ENCODE measurements at regions of chr2 and their contacts with region 1.

Region 1: DNA sequence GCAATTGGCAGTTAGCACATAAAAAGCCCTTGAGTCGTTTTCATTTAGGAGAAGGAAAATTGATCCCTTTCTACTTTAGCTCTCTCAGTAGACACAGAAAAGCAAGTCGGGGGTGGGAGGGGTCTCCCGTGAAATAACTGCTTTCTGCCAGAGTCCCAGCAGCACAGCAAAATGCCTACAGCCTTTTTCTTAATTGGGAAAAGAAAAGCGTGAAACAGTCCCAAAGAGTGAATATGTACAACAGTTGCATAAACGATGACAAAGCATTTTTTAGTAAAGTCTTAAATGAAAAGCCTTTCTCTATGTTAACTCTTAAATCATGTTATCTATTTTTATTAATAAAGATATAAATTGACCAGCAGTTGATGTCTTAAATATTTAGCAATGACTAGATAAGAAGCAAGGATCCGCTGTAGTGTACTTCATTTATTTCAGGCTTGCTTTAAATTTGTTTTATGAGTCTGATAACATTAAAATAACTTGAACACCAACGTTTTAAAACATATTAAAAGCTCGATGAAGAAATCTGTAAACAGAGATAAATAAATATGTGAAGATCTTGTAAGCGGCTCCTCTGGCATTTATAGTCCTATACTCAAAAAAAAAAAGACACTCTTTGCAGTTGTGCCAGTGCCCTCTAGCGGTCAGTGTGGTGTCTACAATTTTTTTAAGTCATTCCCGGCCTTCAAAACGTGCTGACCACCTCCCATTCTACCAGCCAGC is 42.3 kb upstream of the ATIC start:
- DNase-seq: peak; percentile 87
- H3K4me3 Mint-ChIP-seq: no peak overlapping the region
- H3K27ac Mint-ChIP-seq: peak overlapping the region; percentile 49
- H3K4me1 Mint-ChIP-seq: no peaks in the 10 kb centered on the region
- H3K27me3 Mint-ChIP-seq: no peaks in the 10 kb centered on the region
- CTCF ChIP-seq: peak; percentile 74

Region 2: DNA sequence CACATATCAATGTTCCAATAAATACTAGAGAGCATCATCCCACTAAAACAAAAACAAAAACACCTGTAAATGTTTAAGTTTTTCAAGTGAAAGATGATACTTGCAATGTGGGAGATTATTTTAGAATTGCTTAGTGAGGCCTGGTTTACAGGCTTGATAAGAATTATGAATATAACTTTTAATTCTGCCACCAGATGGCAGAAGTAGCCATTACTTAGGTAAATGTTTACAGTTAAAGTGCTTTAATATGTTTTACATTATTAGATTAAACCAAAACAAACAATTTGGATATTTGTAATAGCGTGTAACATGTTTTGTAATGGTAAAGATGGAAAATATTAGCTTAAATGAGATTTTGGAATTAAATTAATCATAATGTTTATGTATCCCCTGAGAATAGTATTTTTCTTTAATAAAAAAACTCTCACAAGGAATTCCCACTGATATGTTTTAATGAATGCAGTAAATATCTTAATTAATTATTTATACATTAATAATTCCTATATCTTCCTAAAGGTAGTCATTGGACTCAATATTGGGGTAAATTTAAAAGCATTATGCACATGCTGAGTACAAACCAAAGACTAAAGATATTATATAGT is 1463.3 kb before region 1 on chr2:
- CTCF ChIA-PET with region 1: no interaction called
- POLR2A ChIA-PET with region 1: no interaction called
- intact Hi-C with region 1: loop called (anchors 10 kb)
- DNase-seq: peak; percentile 46
- H3K4me3 Mint-ChIP-seq: no peak overlapping the region
- H3K27ac Mint-ChIP-seq: no peak overlapping the region
- H3K4me1 Mint-ChIP-seq: no peaks in the 10 kb centered on the region
- H3K27me3 Mint-ChIP-seq: no peaks in the 10 kb centered on the region
- CTCF ChIP-seq: peak; percentile 38

Region 3: GRCh38 chr2:215002500-215002899 is 267.1 kb before region 1 on chr2:
- CTCF ChIA-PET with region 1: interaction called, 13 read pairs
- POLR2A ChIA-PET with region 1: no interaction called
- intact Hi-C with region 1: no loop called
- DNase-seq: peak; percentile 55
- H3K4me3 Mint-ChIP-seq: no peak overlapping the region
- H3K27ac Mint-ChIP-seq: no peak overlapping the region
- H3K4me1 Mint-ChIP-seq: no peaks in the 10 kb centered on the region
- H3K27me3 Mint-ChIP-seq: no peaks in the 10 kb centered on the region
- CTCF ChIP-seq: no peak

Region 4: DNA sequence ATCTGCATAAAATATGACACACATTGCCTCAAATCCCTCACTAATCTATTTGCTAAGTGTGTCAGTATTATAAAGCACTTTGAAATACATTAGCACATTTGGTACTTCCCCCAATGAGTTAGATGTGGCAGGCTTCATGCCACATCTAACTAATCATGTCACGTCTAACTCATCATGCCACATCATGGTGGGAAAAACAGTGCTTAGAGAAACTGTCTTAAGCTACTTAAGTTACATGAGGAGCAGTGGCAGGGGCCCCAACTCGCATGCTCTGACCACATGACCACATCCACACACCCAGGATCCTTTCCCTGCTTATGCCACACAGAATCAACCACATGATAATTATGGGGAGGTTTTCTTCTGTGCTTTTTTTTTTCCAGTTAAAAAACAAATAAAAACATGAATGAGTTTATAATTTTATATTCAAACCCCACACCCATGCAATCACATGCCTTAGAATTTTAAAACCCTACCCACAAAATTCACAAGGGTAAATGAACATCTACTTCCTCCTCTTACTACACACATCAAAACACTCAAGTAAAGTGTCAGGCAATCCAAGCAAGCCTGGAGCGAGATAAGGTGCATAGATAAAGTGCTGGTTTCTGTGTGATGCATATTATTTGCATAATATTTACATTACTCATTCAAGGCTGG is 132.8 kb before region 1 on chr2:
- CTCF ChIA-PET with region 1: interaction called, 11 read pairs
- POLR2A ChIA-PET with region 1: interaction called, 7 read pairs
- intact Hi-C with region 1: no loop called
- DNase-seq: peak; percentile 65
- H3K4me3 Mint-ChIP-seq: peak overlapping the region; percentile 80
- H3K27ac Mint-ChIP-seq: peak overlapping the region; percentile 82
- H3K4me1 Mint-ChIP-seq: peaks cover 48% of the 10 kb centered on the region
- H3K27me3 Mint-ChIP-seq: no peaks in the 10 kb centered on the region
- CTCF ChIP-seq: no peak

Region 5: DNA sequence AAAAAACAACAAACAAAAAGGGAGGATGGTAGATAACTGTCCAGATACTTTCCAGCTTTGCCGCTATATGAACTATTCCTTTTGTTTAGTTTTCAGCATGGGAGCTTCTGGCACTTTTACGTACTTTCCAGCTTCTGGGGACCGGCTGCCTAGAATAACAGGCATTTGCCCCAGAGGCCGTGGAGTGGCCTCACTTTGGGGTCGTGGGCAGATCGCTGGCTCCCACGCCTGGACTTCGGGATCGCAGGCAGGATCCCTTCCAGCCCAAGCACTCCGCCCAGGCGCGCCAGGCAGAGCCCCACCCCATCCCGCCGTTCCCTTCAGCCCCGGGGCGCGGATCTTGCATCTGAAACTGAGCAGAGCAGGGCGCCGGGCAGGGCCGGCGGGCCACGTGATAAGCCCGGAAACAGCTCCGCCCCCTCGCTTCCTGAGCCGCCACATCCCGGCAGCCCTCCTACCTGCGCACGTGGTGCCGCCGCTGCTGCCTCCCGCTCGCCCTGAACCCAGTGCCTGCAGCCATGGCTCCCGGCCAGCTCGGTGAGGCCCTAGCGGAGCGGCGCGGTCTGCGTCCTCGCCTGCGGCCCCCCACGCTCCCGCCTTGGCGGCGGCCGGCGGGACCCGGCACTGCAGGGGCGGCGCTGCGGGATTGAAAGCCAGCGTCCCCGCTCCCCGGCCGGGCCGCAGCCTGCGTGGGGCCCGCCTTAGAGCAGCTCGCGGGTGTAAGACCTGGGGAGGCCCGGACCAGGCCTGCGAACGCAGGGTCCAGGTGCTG is 42.3 kb after region 1 on chr2 and contains the start of gene ATIC:
- CTCF ChIA-PET with region 1: interaction called, 3 read pairs
- POLR2A ChIA-PET with region 1: no interaction called
- intact Hi-C with region 1: loop called (anchors 5 kb)
- DNase-seq: peak; percentile 97
- H3K4me3 Mint-ChIP-seq: peak within 1 kb of the TSS; percentile 83
- H3K27ac Mint-ChIP-seq: peak within 1 kb of the TSS; percentile 88
- H3K4me1 Mint-ChIP-seq: peaks cover 13% of the 10 kb centered on the region
- H3K27me3 Mint-ChIP-seq: no peaks in the 10 kb centered on the region
- CTCF ChIP-seq: no peak
- total RNA-seq, gene ATIC: 216 and 297 TPM in 2 replicates

Region 6: GRCh38 chr2:215435809-215436704 is 166.5 kb after region 1 on chr2 and contains the start of gene FN1:
- CTCF ChIA-PET with region 1: no interaction called
- POLR2A ChIA-PET with region 1: no interaction called
- intact Hi-C with region 1: no loop called
- DNase-seq: peak; percentile 76
- H3K4me3 Mint-ChIP-seq: peak within 1 kb of the TSS; percentile 78
- H3K27ac Mint-ChIP-seq: peak within 1 kb of the TSS; percentile 57
- H3K4me1 Mint-ChIP-seq: peaks cover 28% of the 10 kb centered on the region
- H3K27me3 Mint-ChIP-seq: no peaks in the 10 kb centered on the region
- CTCF ChIP-seq: no peak
- total RNA-seq, gene FN1: 564 and 636 TPM in 2 replicates

Region 7: GRCh38 chr2:216619411-216620393 is 1350.1 kb after region 1 on chr2:
- CTCF ChIA-PET with region 1: no interaction called
- POLR2A ChIA-PET with region 1: no interaction called
- intact Hi-C with region 1: no loop called
- DNase-seq: peak; percentile 48
- H3K4me3 Mint-ChIP-seq: no peak overlapping the region
- H3K27ac Mint-ChIP-seq: no peak overlapping the region
- H3K4me1 Mint-ChIP-seq: peaks cover 10% of the 10 kb centered on the region
- H3K27me3 Mint-ChIP-seq: no peaks in the 10 kb centered on the region
- CTCF ChIP-seq: no peak

Measured in MCF 10A (cell line).